Panc1 (cell line): ENCODE measurements at regions of chr6 and their contacts with region 1.

Region 1: DNA sequence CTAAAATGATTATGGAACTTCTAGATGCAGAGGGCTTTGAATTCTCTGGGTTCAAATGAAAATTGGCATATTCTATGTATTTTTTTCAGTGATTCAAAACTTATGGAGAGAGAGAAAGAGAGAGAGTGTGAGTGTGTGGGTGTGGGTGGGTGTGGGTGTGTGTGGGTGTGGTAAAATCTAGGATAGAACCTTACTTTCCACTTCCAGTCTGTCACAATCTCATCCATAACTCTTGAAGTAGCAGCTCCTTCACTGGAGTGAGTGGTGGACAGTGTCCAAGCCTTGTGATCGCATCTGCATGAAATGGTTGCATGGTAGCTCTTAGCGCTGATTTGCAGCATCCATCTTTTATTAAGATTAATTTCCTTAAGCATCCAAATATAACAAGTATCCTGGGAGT is 37.7 kb downstream of the ADGB start:
- DNase-seq: no peak
- ATAC-seq: no peak
- H3K4me3 ChIP-seq: no peak overlapping the region
- H3K27ac ChIP-seq: no peak overlapping the region
- H3K4me1 ChIP-seq: no peaks in the 10 kb centered on the region
- H3K27me3 ChIP-seq: no peaks in the 10 kb centered on the region; the same call in 1 of the 2 replicates
- CTCF ChIP-seq: no peak

Region 2: GRCh38 chr6:146543211-146543939 is 93.1 kb before region 1 on chr6 and contains the start of gene RAB32:
- CTCF ChIA-PET with region 1: no interaction called
- POLR2A ChIA-PET with region 1: interaction called, 10 read pairs
- in situ Hi-C with region 1: no loop called
- intact Hi-C with region 1: no loop called
- DNase-seq: no peak
- ATAC-seq: peak; percentile 99
- H3K4me3 ChIP-seq: peak within 1 kb of the TSS; percentile 89 to 95
- H3K27ac ChIP-seq: peak within 1 kb of the TSS; percentile 92
- H3K4me1 ChIP-seq: peaks cover 14% of the 10 kb centered on the region
- H3K27me3 ChIP-seq: no peaks in the 10 kb centered on the region
- CTCF ChIP-seq: peak; percentile 86
- total RNA-seq, gene RAB32: 61.5 TPM

Region 3: DNA sequence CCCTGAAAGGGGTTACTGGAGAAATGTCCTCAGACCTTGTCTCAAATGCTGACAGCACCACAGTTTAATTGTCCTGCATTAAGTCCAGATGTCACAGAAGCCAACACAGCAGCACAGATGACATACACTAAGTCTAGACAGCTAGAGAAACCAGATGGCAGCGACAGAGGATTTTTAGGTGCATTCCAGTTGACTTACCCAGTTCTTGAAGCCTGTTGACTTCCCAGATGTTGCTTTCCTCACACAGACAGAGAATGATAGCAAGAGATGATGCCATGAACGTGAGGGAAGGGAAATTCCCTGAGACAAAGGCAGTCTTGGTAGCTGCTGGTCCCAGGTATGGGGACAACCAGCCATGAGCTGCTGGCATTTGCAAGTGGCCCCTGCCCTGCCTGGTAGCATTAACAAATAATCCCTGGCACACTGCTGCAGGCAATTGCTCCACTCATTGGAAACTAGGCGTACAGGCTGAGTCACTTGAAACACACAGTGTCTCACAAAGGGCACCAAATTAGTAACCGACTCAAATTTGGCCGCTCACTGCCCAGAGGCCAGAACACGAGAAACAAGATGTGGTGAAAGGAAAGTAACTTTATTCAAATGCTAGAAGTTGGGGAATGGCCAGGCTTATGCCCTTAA is 14.5 kb after region 1 on chr6:
- CTCF ChIA-PET with region 1: no interaction called
- POLR2A ChIA-PET with region 1: no interaction called
- in situ Hi-C with region 1: no loop called
- intact Hi-C with region 1: no loop called
- DNase-seq: no peak
- ATAC-seq: peak; percentile 34; the same call in 1 of the 2 replicates
- H3K4me3 ChIP-seq: no peak overlapping the region
- H3K27ac ChIP-seq: no peak overlapping the region
- H3K4me1 ChIP-seq: no peaks in the 10 kb centered on the region
- H3K27me3 ChIP-seq: no peaks in the 10 kb centered on the region
- CTCF ChIP-seq: no peak